ENCODE measurements at regions of chr9 and their contacts with region 1.

Region 1: DNA sequence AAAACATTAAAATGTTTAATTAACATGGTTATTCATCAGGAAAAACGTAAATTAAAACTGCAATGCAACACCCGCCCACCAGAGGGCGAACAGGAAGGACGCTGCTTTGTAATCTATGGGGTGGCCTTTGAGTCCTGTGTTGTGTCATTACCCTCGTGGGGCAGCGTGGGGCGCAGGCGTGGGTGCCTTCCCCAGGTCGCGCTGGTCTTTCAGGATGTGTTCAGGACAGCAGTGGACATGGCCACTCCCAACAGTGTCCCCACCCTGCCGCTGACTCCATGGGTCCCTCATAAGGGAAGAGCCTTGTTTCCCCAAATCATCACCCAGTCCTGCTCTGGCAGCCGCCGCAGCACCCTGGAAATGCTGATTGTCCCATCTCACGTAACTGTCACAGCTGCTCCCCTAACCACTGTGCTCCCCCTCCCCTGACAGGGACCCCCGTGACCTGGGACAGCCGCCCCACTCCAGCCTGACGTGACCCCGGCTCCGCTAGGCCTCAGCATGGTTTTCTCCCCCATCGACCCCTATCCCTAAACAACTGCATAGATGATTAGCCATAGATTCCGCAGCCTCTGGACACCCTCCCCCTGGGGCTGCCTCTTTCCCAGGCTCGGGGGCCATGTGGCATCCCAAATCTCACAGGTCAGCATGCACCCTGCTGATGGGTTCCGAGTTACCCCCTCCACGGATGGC is 36.4 kb downstream of the GLT6D1 start:
- DNase-seq: peak; percentile 51
- H3K4me3 Mint-ChIP-seq: no peak overlapping the region
- H3K27ac Mint-ChIP-seq: no peak overlapping the region
- H3K4me1 Mint-ChIP-seq: no peaks in the 10 kb centered on the region
- H3K27me3 Mint-ChIP-seq: peaks cover 39% of the 10 kb centered on the region
- CTCF ChIP-seq: peak; percentile 72

Region 2: GRCh38 chr9:135221951-135222631 is 380.8 kb before region 1 on chr9:
- CTCF ChIA-PET with region 1: no interaction called
- POLR2A ChIA-PET with region 1: no interaction called
- intact Hi-C with region 1: no loop called
- DNase-seq: no peak
- H3K4me3 Mint-ChIP-seq: no peak overlapping the region
- H3K27ac Mint-ChIP-seq: no peak overlapping the region
- H3K4me1 Mint-ChIP-seq: no peaks in the 10 kb centered on the region
- H3K27me3 Mint-ChIP-seq: no peaks in the 10 kb centered on the region
- CTCF ChIP-seq: peak; percentile 5

Region 3: DNA sequence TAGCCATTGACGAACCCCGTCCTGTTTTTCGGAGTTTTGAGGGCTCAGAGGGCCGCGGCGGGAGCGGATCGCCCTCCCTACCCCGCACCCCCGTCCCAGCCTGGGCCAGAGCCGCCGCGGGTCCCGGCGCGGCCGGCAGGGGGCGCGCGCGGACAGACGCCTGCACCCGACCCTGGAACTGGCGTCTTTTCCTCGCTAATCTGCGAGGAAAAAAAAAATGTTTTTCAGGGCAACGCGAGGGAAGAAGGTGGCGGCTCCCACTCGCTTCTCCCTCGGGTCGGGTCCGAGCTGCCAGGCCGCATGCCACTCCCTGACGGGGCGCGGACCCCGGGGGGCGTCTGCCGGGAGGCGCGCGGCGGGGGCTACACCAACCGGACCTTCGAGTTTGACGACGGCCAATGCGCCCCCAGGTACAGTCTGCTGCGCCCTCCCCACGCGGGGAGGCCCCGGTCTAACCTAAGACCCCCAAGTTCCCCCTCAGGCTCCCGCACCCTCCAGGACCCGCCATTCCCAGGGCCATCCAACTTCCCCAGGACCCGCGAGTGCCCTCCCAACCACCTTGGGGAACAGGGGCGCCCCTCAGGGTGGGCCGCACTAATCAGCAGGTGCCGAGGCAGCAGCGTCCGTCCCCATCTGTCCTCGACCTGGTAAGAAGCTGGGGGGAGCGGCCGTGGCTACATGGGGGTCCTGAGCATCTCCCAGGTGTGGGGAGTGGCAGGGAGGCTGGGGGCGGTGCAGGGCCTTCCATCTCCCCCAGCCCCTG is 99.2 kb after region 1 on chr9 and contains the start of gene KCNT1:
- CTCF ChIA-PET with region 1: interaction called, 4 read pairs
- POLR2A ChIA-PET with region 1: no interaction called
- intact Hi-C with region 1: loop called (anchors 10 kb)
- DNase-seq: peak; percentile 54
- H3K4me3 Mint-ChIP-seq: no peak within 1 kb of the TSS
- H3K27ac Mint-ChIP-seq: no peak within 1 kb of the TSS
- H3K4me1 Mint-ChIP-seq: no peaks in the 10 kb centered on the region
- H3K27me3 Mint-ChIP-seq: no peaks in the 10 kb centered on the region
- CTCF ChIP-seq: peak; percentile 94
- total RNA-seq, gene KCNT1: not detected in 2 replicates

Region 4: DNA sequence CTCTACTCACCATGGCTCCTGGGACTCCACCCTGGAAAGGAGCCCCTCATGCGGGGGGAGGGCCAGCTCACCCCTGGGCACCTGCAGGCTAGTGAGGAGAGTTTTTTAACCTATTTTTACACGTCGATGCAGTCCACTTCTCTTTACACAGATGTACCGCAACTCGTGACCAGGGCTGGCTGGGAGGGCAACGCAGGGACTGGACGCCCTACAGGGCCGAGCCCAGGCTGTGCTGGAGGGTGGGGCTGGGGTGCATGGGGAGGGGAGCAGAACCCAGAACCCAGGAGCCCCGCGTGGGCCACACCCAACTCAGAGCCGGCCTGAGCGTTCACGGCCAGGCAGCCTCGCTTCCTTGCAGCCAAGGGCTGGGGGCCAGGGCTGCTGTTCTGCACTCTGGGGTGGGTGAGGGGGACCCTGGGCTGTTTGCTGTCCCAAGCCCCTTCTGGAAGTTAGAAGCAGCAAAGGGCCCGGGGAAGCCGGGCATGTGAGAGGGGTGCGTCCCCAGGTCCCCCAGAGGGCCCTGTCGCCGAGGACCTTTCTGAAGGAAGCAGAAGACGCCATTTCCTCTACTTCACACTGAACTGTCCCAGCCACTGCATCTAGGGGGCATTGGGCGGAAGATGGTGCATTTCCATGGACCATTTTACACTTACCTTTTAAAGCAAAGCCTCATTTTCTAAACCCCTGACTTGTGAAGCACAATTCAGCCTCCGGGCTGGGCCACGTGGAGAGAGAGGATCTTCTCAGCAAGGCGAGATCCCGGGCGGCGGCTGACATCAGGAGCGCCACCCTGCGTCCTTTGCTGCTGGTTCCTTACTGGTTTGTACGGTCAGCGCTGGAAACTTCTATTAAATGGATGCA is 189.6 kb after region 1 on chr9:
- CTCF ChIA-PET with region 1: interaction called, 4 read pairs
- POLR2A ChIA-PET with region 1: no interaction called
- intact Hi-C with region 1: loop called (anchors 5 kb)
- DNase-seq: no peak
- H3K4me3 Mint-ChIP-seq: no peak overlapping the region
- H3K27ac Mint-ChIP-seq: no peak overlapping the region
- H3K4me1 Mint-ChIP-seq: no peaks in the 10 kb centered on the region
- H3K27me3 Mint-ChIP-seq: peaks cover 33% of the 10 kb centered on the region
- CTCF ChIP-seq: no peak

Measured in MCF 10A (cell line).